Prostate gland (tissue), 2 donors: ENCODE measurements at regions of chr3 and their contacts with region 1.

Region 1: GRCh38 chr3:186930641-186931531 is 560 bp downstream of the ST6GAL1 start:
- DNase-seq: peak; percentile 54
- H3K4me3 ChIP-seq: peak overlapping the region; percentile 73 to 92
- H3K27ac ChIP-seq: peak overlapping the region; percentile 94 to 96
- H3K4me1 ChIP-seq: peaks cover 3% of the 10 kb centered on the region
- H3K27me3 ChIP-seq: no peaks in the 10 kb centered on the region
- CTCF ChIP-seq: peak in 1 of 4 experiments; percentile 12
- POLR2A ChIP-seq: no peak

Region 2: DNA sequence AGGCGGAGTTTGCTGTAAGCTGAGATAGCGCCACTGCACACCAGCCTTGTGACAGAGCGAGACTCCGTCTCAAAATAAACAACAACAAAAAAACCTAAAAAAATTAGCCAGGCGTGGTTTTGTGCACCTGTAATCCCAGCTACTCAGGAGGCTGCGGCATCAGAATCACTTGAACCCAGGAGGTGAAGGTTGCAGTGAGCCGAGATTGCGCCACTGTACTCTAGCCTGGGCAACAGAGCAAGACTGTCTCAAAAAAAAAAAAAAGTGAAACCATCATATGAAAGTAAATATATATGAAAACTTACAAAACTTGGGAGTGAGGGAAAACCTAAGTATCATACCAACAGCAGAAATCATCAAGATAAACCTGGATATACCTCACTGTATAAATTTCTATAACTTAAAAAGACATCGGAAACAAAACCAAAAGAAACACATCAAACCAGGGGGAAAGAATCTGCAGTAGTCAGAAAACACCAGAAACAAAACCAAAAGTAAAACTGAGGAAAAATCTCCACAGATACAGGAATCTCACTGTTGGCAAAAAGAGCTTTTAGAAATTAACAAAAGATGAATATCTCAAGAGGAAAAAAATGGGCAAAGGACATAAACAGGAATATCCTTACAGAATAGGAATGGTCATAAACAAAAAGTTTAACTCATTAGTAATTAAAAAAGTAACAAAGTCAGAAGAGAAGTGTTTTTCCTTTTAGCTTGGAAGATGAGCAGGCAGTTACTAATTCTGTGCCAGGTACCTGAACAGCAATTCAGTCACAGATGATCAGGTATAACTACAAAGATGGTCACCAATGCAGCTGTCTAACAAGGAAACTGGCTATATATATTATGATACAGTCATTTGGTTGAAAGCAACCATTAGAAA is 863.3 kb before region 1 on chr3:
- intact Hi-C with region 1: no loop called
- DNase-seq: no peak
- H3K4me3 ChIP-seq: no peak overlapping the region
- H3K27ac ChIP-seq: no peak overlapping the region
- H3K4me1 ChIP-seq: no peaks in the 10 kb centered on the region
- H3K27me3 ChIP-seq: no peaks in the 10 kb centered on the region
- CTCF ChIP-seq: no peak
- POLR2A ChIP-seq: no peak

Region 3: GRCh38 chr3:186976837-186977750 is 46.2 kb after region 1 on chr3:
- intact Hi-C with region 1: loop called (anchors 5 kb)
- DNase-seq: peak; percentile 97
- H3K4me3 ChIP-seq: no peak overlapping the region
- H3K27ac ChIP-seq: peak overlapping the region; percentile 82 to 87
- H3K4me1 ChIP-seq: peaks cover 17% of the 10 kb centered on the region
- H3K27me3 ChIP-seq: no peaks in the 10 kb centered on the region
- CTCF ChIP-seq: peak in 2 of 4 experiments; percentile 21 to 48
- POLR2A ChIP-seq: peak; percentile 51

Region 4: DNA sequence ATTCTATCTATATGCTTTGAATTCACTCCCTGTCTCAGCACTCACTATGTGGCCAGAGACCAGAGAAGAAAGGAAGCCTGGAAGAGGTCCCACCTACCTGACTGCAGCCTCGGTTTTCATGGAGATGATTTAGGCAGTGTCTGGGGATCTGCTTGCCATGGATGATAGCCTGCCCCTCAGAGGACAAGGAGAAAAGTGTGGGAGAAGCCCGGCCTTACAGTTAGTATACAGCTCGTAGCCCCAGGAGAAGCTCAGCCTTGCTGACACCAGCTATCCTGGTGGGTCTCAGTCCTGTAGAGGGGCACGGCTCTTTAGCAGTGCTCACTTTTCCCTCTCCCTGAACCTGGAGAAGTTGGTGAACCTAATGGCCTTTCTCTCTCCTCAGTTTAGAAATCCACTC is 411.4 kb after region 1 on chr3:
- intact Hi-C with region 1: no loop called
- DNase-seq: no peak
- H3K4me3 ChIP-seq: no peak overlapping the region
- H3K27ac ChIP-seq: no peak overlapping the region
- H3K4me1 ChIP-seq: no peaks in the 10 kb centered on the region
- H3K27me3 ChIP-seq: peaks cover 2% of the 10 kb centered on the region
- CTCF ChIP-seq: no peak
- POLR2A ChIP-seq: no peak